ENCODE measurements at regions of chr14 and their contacts with region 1.

Region 1: DNA sequence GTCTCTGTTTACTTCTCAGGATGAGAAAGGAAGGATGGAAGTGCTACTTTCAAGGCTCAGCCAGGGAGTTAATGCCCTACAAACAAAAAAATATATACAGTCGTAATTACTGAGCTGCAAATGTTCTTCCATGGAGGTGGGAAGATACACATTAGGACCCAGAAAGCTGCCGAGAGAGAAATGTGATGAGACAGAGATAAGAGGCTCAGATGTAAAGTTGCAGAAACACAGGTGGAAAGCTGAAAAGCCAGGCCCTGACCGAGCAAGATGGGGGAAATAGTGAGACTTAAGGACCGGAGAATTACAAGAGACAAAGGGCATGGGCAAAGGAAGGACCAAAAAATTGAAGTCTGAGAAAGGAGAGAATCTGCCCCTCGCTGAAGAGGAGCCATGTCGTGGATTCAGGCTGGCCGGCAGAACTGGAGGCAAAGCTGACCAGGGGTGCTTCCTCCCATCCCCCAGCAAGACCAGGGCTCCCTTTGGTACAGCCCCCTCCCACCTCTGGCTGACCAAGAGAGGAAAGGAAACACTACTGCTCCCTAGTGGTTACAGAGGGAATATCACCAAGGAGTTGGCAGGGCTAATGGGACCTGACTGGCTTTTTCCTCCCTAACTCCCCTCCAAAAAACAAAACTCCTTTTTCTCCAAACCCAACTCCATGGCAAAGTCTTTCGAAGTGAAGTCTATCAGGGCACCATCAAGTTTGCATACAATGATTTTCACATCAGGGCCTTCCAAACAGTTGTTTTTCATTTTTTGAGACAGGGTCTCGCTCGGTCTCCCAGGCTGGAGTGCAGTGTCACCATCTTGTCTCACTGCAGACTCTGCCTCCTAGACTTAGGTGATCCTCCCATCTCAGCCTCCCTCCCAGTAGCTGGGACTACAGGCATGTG is 12.1 kb downstream of the ZFHX2 start:
- DNase-seq: no peak
- ATAC-seq: peak; percentile 77
- H3K4me3 Mint-ChIP-seq: no peak overlapping the region
- H3K27ac Mint-ChIP-seq: no peak overlapping the region
- H3K4me1 Mint-ChIP-seq: peaks cover 2% of the 10 kb centered on the region
- H3K27me3 Mint-ChIP-seq: peaks cover 2% of the 10 kb centered on the region

Region 2: GRCh38 chr14:23366426-23366921 is 173.0 kb before region 1 on chr14:
- CTCF ChIA-PET with region 1: no interaction called
- DNase-seq: no peak
- ATAC-seq: no peak
- H3K4me3 Mint-ChIP-seq: no peak overlapping the region
- H3K27ac Mint-ChIP-seq: no peak overlapping the region
- H3K4me1 Mint-ChIP-seq: peaks cover 4% of the 10 kb centered on the region
- H3K27me3 Mint-ChIP-seq: peaks cover 41% of the 10 kb centered on the region

Region 3: GRCh38 chr14:23478111-23478759 is 61.3 kb before region 1 on chr14:
- CTCF ChIA-PET with region 1: interaction called, 52 read pairs
- DNase-seq: peak; percentile 77
- ATAC-seq: peak; percentile 65
- H3K4me3 Mint-ChIP-seq: no peak overlapping the region
- H3K27ac Mint-ChIP-seq: no peak overlapping the region
- H3K4me1 Mint-ChIP-seq: peaks cover 3% of the 10 kb centered on the region
- H3K27me3 Mint-ChIP-seq: no peaks in the 10 kb centered on the region

Region 4: DNA sequence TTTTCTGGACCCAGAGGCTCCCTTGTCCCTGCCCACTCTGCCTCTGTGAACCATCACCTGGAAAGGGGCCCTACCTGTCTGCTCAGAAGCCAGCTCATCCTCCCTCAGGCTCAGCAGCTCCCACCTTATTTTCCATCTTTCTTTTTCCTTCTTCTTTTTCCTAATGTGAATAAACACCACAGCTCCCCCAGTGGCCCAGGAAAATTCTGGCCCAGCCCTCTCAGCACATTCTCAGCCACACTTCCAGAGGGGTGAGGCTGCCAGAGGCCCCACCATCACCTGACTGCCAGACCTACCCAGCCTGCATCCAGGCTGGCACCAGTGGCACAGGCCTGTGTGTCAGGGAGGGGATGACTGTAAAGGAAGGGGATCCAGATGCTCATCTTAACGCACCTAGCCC is 10.9 kb before region 1 on chr14:
- CTCF ChIA-PET with region 1: interaction called, 16 read pairs
- DNase-seq: no peak
- ATAC-seq: no peak
- H3K4me3 Mint-ChIP-seq: no peak overlapping the region
- H3K27ac Mint-ChIP-seq: no peak overlapping the region
- H3K4me1 Mint-ChIP-seq: no peaks in the 10 kb centered on the region
- H3K27me3 Mint-ChIP-seq: no peaks in the 10 kb centered on the region